ENCODE measurements at regions of chr20 and their contacts with region 1.

Region 1: GRCh38 chr20:24992487-24993205 is at the start of gene APMAP:
- DNase-seq: peak; percentile 97 to 99 (median 98)
- ATAC-seq: peak; percentile 98
- H3K4me3 ChIP-seq: peak within 1 kb of the TSS; percentile 71
- H3K4me1 ChIP-seq: peaks cover 15% of the 10 kb centered on the region
- CTCF ChIP-seq: no peak
- total RNA-seq, gene APMAP: 46.3 to 51.5 (median 47.3) TPM

Region 2: DNA sequence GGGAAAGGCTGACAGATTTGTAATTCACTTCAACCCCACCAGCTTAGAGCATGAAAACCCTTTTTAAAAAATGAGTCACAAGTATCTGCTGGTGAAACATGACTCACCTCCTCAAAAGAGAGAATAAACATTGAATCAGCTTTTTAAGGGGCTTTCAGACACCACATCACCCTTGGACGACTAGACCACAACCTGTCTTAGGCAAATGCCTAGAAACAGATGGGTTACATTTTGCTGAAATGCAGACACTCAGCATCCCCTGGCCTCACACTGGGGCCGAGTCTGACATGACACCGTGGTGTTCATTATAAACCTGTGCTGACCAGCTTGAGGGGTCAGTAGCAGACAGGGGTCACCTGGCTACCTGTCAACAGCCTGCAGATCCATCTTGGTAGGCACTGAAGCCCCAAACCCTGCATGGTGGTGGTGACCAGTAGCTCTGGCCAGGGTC is 218.9 kb before region 1 on chr20:
- intact Hi-C with region 1: no loop called
- DNase-seq: no peak
- ATAC-seq: no peak
- H3K4me3 ChIP-seq: no peak overlapping the region
- H3K4me1 ChIP-seq: no peaks in the 10 kb centered on the region
- CTCF ChIP-seq: no peak

Region 3: DNA sequence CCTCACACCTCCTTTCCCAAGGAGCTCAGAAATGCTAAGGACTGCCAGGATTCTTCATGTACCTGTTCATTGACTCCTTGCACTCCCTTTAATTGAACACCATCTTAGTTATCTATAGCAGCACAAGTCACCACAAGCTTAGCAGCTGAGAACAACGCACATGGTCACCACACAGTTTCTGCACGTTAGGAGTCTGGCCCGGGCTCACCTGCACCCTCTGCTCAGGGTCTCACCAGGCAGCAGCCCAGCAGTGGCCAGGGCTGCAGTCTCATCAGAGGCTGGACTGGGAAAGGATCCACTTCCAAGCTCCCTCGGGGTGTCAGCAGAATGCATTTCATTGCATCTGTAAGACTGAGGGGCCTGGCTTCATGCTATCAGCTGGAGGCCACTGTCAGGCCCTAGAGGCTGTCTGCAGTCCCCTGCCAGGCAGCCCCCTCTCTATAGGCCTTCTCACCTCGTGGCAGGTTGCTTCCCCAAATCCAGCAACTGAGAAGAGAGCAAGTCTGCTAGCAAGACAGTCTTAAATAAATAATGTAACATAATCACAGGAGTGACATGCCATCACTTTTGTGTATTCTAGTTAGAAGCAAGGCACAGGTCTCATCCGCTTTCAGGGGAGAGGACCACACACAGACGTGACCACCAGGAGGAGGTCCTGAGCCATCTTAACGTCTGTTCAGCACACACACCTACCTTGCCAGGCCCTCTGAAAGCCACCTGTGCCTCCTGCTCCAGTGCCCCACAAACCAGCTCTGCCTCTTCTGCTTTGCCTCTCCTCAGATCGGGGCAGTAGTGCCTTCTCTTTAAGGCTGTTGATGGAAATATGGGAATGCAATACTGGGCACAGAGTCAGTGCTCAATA is 208.8 kb before region 1 on chr20:
- intact Hi-C with region 1: no loop called
- DNase-seq: peak in 1 of 3 donors; percentile 30
- ATAC-seq: peak; percentile 28
- H3K4me3 ChIP-seq: no peak overlapping the region
- H3K4me1 ChIP-seq: no peaks in the 10 kb centered on the region
- CTCF ChIP-seq: no peak

Region 4: GRCh38 chr20:24872291-24873024 is 120.2 kb before region 1 on chr20:
- intact Hi-C with region 1: no loop called
- DNase-seq: no peak
- ATAC-seq: no peak
- H3K4me3 ChIP-seq: no peak overlapping the region
- H3K4me1 ChIP-seq: no peaks in the 10 kb centered on the region
- CTCF ChIP-seq: no peak

Region 5: GRCh38 chr20:25065625-25066338 is 73.1 kb after region 1 on chr20:
- intact Hi-C with region 1: loop called (anchors 2 kb)
- DNase-seq: peak in 2 of 3 donors; percentile 64 to 87
- ATAC-seq: peak; percentile 79
- H3K4me3 ChIP-seq: no peak overlapping the region
- H3K4me1 ChIP-seq: peaks cover 7% of the 10 kb centered on the region
- CTCF ChIP-seq: no peak

Region 6: DNA sequence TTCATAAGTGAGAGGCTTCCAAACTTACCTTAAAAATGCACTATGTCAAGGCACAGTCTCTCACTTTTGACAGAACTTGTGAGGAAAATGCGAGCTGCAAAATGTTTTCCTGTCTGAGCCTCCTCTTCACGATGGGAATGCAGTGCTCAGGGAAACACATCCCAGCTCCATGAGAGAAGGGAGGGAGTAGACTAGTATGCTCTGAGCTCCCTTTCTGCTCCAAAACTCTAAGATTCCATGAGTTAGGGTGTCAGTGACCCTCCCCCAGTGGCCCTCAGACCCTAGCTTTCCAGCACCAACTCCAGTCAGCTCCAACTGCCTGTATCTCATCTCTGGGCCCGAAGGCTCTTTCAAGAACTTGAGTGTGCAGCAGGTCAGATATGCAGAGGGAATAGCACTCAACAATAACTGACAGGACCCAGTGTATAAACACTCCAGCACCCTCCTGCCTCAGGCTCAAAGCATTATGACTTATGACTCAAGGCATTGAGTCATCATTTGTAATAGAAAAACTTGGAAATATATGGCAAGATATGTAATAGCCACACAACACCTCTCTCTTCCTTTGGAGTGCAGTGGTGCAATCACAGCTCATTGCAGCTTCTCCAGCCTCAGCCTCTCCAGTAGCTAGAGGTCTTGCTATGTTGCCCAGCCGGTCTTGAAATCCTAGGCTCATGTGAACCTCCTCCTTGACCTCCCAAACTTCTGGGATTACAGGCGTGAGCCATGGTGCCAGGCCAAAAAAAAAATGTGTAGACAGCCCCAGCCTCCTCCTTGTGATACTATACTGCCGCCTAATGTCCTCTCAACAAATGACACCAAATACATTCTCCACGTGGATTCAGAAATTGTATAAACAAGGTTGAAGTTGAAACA is 186.2 kb after region 1 on chr20:
- intact Hi-C with region 1: loop called (anchors 2 to 10 kb)
- DNase-seq: peak in 1 of 3 donors; percentile 59
- ATAC-seq: peak; percentile 81
- H3K4me3 ChIP-seq: no peak overlapping the region
- H3K4me1 ChIP-seq: no peaks in the 10 kb centered on the region
- CTCF ChIP-seq: peak; percentile 31

Region 7: DNA sequence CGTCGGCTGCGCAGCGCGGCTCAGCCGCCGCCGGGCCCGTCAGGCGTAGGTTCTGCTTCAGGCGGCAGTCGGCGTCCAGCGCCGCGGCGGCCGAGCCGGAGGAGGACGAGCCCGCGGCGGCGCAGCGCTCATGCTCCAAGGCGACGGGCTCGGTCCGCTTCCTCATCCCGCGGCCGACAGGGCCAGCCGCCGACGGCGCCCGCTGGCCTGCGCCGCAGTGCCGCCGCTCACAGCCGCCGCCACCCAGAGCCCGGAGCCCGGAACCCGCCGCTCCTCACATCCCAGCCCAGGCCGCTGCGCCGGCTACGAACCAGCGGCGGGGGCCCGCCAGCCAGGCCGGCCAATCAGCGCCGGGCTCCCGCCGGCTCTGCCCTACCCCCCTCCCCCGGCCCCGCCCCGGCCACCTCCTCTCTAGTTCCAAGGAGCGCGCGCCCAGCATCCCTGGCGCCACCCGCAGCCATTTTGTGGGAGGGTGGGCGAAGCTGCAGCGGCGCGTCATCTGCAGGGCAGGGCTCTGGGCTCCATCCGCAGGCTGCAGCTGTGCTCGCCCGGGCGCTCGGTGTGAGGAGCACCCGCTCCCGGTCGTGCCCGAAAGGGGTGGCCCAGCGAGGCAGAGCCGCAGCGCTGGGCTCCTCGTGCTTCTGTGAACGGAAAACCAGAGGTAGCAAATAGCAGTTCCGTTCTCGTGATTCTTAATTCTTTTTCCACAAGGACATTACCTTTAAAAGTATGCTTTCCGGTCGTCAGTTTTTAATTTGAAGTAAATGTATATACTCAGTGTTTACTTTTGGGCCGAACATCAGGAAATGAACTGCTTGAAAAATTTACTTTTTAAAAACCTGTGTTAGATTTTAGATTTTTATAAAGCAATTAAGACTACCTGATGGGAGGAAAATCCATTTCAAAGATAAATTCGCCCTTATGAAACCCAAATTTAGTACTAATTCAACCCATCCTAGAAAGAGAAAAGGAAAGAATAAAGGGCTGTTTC is 398.2 kb after region 1 on chr20 and contains the start of gene ABHD12:
- intact Hi-C with region 1: loop called in 1 of 2 experiments (anchors 10 kb)
- DNase-seq: peak; percentile 96 to 98 (median 98)
- ATAC-seq: peak; percentile 97
- H3K4me3 ChIP-seq: peak within 1 kb of the TSS; percentile 80
- H3K4me1 ChIP-seq: no peaks in the 10 kb centered on the region
- CTCF ChIP-seq: no peak
- total RNA-seq, gene ABHD12: 47.3 to 65.5 (median 59.5) TPM

Region 8: GRCh38 chr20:25407311-25408169 is 414.9 kb after region 1 on chr20 and contains the start of gene GINS1:
- intact Hi-C with region 1: loop called in 1 of 2 experiments (anchors 5 kb)
- DNase-seq: peak; percentile 88 to 90 (median 90)
- ATAC-seq: peak; percentile 99
- H3K4me3 ChIP-seq: peak within 1 kb of the TSS; percentile 35
- H3K4me1 ChIP-seq: peaks cover 6% of the 10 kb centered on the region
- CTCF ChIP-seq: no peak
- total RNA-seq, gene GINS1: 1.8 to 8.6 (median 1.9) TPM

Region 9: DNA sequence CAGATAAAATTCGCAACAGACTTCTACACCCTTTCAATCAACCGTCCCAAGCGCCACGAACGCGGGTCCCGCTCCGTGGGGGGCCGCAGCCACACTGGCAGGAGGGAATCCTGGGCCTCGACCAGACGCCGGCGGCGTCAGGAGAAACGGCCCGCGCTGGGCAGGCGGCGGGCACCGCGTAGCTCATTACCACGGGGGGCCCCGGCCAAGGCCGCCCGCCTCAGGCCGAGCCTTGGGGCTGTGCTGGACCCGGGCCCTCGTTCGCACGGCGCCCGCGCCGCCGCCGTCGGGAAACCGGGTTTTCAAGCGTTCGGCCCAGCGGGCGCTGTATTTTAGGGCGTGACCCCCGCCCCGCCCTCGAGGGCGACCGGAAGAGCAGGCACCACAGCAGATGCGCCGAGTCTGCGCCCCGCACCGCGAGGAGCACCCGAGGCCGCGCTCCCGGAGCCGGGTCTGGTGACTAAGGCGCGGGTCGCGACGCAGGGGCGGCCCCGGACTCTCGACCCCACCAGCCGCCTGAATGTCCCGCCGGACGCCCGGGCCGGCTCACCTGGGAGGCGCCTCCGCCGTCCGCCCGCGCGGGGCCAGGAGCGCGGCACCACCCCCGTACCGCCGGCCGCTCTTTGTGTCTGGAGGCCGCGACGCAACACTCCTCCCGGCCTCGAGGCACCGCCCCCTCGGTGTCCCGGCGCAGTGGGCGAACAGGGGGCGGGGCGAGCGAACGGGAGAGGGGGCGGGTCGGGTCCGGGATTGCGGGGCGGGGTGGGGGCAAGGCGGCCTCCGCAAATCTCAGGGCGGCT is 592.5 kb after region 1 on chr20 and contains the start of gene NINL:
- intact Hi-C with region 1: no loop called
- DNase-seq: peak; percentile 51 to 75 (median 67)
- ATAC-seq: peak; percentile 92
- H3K4me3 ChIP-seq: peak within 1 kb of the TSS; percentile 32
- H3K4me1 ChIP-seq: peaks cover 6% of the 10 kb centered on the region
- CTCF ChIP-seq: no peak
- total RNA-seq, gene NINL: 1.8 to 15.1 (median 3.3) TPM

Measured in mucosa of descending colon (tissue), 3 donors.